ENCODE measurements at regions of chr3 and their contacts with region 1.

Region 1: DNA sequence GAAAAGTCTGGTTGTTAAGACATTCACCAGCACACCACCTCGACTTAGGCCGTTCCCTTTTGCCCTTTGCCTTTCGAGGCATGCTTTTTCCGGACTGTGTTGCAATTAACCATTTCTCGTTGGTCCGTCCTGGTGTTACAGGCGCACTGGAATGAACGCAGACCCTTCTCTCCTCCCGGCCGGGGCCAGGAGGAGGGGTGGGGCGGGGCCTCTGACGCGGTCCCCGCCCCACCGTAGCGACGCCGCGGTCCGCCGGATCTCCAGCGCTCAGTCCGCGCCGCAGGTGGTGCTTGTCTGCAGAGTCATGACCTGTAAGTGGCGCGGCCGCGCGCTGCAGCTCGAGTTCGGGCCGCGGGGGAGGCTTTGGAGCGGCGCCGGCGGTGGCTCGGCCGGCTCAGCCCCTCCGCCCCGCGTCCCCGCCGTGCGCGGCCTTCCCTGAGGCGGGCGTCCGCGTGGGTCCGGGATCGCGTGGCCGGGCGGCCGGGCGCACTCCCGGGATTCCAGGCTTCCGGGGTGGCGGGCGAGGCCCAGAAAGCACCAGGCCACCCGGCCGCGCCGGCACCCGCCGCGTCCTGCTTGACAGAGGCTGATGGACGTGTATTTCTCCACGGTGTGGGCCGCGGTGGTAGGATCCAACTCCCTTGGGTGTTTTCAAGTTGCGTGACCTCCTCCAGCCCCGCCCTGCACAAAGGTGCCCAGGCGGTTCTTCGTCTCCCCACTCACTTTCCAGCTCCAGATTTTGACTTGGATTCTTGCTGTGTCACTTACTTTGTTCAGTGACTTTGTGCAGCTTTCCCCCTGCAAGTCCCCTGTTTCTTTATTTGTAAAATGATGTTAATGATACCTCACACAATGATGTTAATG is at the start of gene NIT2:
- DNase-seq: no peak
- ATAC-seq: peak; percentile 96
- H3K4me3 ChIP-seq: peak within 1 kb of the TSS; percentile 91
- H3K27ac ChIP-seq: peak within 1 kb of the TSS; percentile 80
- H3K4me1 ChIP-seq: peaks cover 8% of the 10 kb centered on the region
- H3K27me3 ChIP-seq: no peaks in the 10 kb centered on the region
- CTCF ChIP-seq: no peak; a peak in 1 of 6 replicates
- EP300 ChIP-seq: no peak
- POLR2A ChIP-seq: peak; percentile 96
- RAD21 ChIP-seq: no peak
- polyA plus RNA-seq, gene NIT2: 188 to 215 TPM

Region 2: GRCh38 chr3:100260685-100261484 is 73.8 kb before region 1 on chr3 and contains the start of gene TBC1D23:
- CTCF ChIA-PET with region 1: interaction called, 5 read pairs
- POLR2A ChIA-PET with region 1: no interaction called
- RAD21 ChIA-PET with region 1: no interaction called
- SMC1A ChIA-PET with region 1: interaction called, 3 read pairs
- in situ Hi-C with region 1: no loop called
- intact Hi-C with region 1: loop called (anchors 1 kb)
- DNase-seq: peak; percentile 98
- ATAC-seq: peak; percentile 99
- H3K4me3 ChIP-seq: peak within 1 kb of the TSS; percentile 95
- H3K27ac ChIP-seq: peak within 1 kb of the TSS; percentile 84
- H3K4me1 ChIP-seq: no peaks in the 10 kb centered on the region
- H3K27me3 ChIP-seq: no peaks in the 10 kb centered on the region
- CTCF ChIP-seq: no peak
- EP300 ChIP-seq: no peak
- POLR2A ChIP-seq: peak; percentile 87
- RAD21 ChIP-seq: no peak
- polyA plus RNA-seq, gene TBC1D23: 13.5 to 16.2 TPM

Region 3: GRCh38 chr3:100316641-100317069 is 18.1 kb before region 1 on chr3:
- CTCF ChIA-PET with region 1: interaction called, 21 read pairs
- POLR2A ChIA-PET with region 1: no interaction called
- RAD21 ChIA-PET with region 1: interaction called, 10 read pairs
- SMC1A ChIA-PET with region 1: interaction called, 26 read pairs
- in situ Hi-C with region 1: no loop called
- intact Hi-C with region 1: no loop called
- DNase-seq: no peak
- ATAC-seq: peak; percentile 80
- H3K4me3 ChIP-seq: no peak overlapping the region
- H3K27ac ChIP-seq: no peak overlapping the region
- H3K4me1 ChIP-seq: peaks cover 3% of the 10 kb centered on the region; the same call in 1 of the 2 replicates
- H3K27me3 ChIP-seq: no peaks in the 10 kb centered on the region
- CTCF ChIP-seq: peak; percentile 66 to 67 (median 67)
- EP300 ChIP-seq: no peak
- POLR2A ChIP-seq: no peak
- RAD21 ChIP-seq: peak; percentile 81

Region 4: GRCh38 chr3:100400780-100401673 is 66.3 kb after region 1 on chr3 and contains the starts of genes LNP1 and TOMM70:
- CTCF ChIA-PET with region 1: interaction called, 8 read pairs
- POLR2A ChIA-PET with region 1: interaction called, 12 read pairs
- RAD21 ChIA-PET with region 1: no interaction called
- SMC1A ChIA-PET with region 1: interaction called, 7 read pairs
- in situ Hi-C with region 1: no loop called
- intact Hi-C with region 1: no loop called
- DNase-seq: peak; percentile 85
- ATAC-seq: peak; percentile 90
- H3K4me3 ChIP-seq: peak within 1 kb of the TSS; percentile 73
- H3K27ac ChIP-seq: peak within 1 kb of the TSS; percentile 99
- H3K4me1 ChIP-seq: no peaks in the 10 kb centered on the region
- H3K27me3 ChIP-seq: no peaks in the 10 kb centered on the region
- CTCF ChIP-seq: no peak
- EP300 ChIP-seq: no peak
- POLR2A ChIP-seq: peak; percentile 86
- RAD21 ChIP-seq: no peak
- polyA plus RNA-seq, gene LNP1: 2.1 to 2.5 TPM
- polyA plus RNA-seq, gene TOMM70: 12.7 to 22.6 TPM

Region 5: DNA sequence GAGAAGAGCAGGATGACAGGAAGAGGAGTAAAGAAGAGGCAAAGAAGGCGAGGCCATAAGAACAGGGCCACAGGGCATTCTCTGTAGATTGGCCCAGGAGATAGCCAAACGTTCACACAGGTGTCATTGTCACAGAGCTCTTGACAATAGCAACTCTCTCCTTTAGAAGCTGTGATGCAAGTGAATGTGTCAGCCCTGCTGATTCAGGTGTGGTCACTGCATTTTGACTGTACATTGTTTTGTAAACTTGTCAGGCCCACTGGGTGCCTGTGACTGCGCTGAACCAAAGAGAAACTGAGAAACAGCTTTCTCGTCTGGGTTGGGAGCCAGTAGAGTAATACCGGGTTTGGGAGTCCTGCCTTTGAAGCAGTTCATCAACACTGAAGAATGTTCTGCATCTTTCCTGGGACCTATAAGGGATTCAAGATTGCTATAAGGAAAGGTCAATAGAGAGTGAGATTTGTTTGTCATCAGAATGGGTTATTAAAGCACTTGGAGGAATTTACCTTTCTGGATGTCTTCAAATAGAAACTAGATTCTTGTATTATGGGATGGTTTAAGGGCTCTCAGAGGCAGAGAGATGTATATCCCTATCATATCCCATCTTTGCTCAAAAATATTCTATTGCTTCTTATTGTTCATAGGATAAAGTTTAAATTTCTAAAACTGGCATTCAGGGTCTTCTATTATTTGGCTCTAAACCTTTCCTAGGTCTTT is 203.1 kb after region 1 on chr3:
- CTCF ChIA-PET with region 1: no interaction called
- POLR2A ChIA-PET with region 1: no interaction called
- RAD21 ChIA-PET with region 1: no interaction called
- SMC1A ChIA-PET with region 1: no interaction called
- in situ Hi-C with region 1: no loop called
- intact Hi-C with region 1: no loop called
- DNase-seq: no peak
- ATAC-seq: peak; percentile 55
- H3K4me3 ChIP-seq: no peak overlapping the region
- H3K27ac ChIP-seq: no peak overlapping the region
- H3K4me1 ChIP-seq: no peaks in the 10 kb centered on the region
- H3K27me3 ChIP-seq: no peaks in the 10 kb centered on the region
- CTCF ChIP-seq: no peak
- EP300 ChIP-seq: no peak
- POLR2A ChIP-seq: no peak
- RAD21 ChIP-seq: no peak

Measured in GM12878 (cell line).